Panc1 (cell line): ENCODE measurements at regions of chr14 and their contacts with region 1.

Region 1: GRCh38 chr14:102540315-102541029 is 30.9 kb upstream of the ANKRD9 start:
- DNase-seq: no peak
- ATAC-seq: no peak
- H3K4me3 ChIP-seq: no peak overlapping the region
- H3K27ac ChIP-seq: no peak overlapping the region
- H3K4me1 ChIP-seq: peaks cover 3% of the 10 kb centered on the region
- H3K27me3 ChIP-seq: no peaks in the 10 kb centered on the region
- CTCF ChIP-seq: no peak

Region 2: GRCh38 chr14:102568114-102568621 is 27.7 kb after region 1 on chr14:
- CTCF ChIA-PET with region 1: interaction called, 10 read pairs
- POLR2A ChIA-PET with region 1: no interaction called
- in situ Hi-C with region 1: no loop called
- intact Hi-C with region 1: no loop called
- DNase-seq: no peak
- ATAC-seq: no peak
- H3K4me3 ChIP-seq: no peak overlapping the region
- H3K27ac ChIP-seq: no peak overlapping the region
- H3K4me1 ChIP-seq: no peaks in the 10 kb centered on the region
- H3K27me3 ChIP-seq: no peaks in the 10 kb centered on the region
- CTCF ChIP-seq: no peak

Region 3: GRCh38 chr14:102731871-102732800 is 191.7 kb after region 1 on chr14:
- CTCF ChIA-PET with region 1: no interaction called
- POLR2A ChIA-PET with region 1: no interaction called
- in situ Hi-C with region 1: no loop called
- intact Hi-C with region 1: no loop called
- DNase-seq: no peak
- ATAC-seq: 0 out of 2 replicates have a peak, but pooled peaks have one; percentile 34
- H3K4me3 ChIP-seq: no peak overlapping the region
- H3K27ac ChIP-seq: no peak overlapping the region
- H3K4me1 ChIP-seq: no peaks in the 10 kb centered on the region
- H3K27me3 ChIP-seq: no peaks in the 10 kb centered on the region
- CTCF ChIP-seq: no peak